ENCODE measurements at regions of chr1 and their contacts with region 1.

Region 1: GRCh38 chr1:230066466-230067404 is at the start of gene GALNT2:
- DNase-seq: peak; percentile 87
- H3K4me3 Mint-ChIP-seq: peak within 1 kb of the TSS; percentile 89
- H3K27ac Mint-ChIP-seq: peak within 1 kb of the TSS; percentile 85
- H3K4me1 Mint-ChIP-seq: peaks cover 32% of the 10 kb centered on the region
- H3K27me3 Mint-ChIP-seq: peaks cover 6% of the 10 kb centered on the region
- total RNA-seq, gene GALNT2: 58.9 and 59.3 TPM in 2 replicates

Region 2: DNA sequence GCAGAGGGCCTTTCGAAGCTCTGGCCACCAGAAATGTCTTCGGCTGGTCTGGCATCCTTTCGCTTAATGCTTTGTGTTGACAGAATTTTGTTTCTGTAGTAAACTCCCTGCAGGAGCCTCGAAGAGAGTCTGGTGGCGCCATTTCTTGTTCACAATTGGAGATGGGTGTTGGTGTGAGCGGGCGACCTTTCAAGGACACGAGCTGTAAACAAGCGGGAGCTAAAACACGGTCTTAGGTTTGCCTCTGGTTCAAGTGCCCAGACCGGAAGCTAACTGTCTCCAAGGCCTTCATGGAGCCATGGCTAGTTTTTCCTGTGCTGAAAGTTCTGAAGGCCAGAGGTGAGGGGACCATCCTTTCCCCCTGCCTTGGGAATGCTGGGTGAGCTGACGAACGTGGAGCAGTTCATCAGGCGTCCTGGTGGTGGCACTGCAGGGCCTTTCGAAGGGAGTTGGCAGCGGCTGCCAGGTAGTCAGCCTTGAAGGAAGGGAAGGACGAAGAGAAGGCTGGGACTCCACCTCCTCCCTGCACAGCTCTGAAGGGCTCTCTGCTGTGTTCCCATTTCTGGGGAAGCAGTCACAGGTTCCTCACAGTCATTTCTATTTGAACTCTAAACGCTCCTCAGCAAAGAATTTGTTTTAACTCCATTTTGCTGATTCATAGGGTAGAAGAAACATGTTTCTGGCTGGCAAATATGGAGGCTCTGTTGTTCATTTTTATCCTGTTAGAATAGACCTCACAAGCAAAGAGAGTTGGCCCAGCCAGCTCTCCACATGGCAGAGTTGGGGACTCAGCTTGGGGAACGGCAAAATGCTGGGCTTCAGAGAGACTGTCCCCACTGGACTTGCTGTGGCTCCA is 405.5 kb before region 1 on chr1:
- intact Hi-C with region 1: loop called (anchors 5 kb)
- DNase-seq: peak; percentile 41
- H3K4me3 Mint-ChIP-seq: no peak overlapping the region
- H3K27ac Mint-ChIP-seq: no peak overlapping the region
- H3K4me1 Mint-ChIP-seq: peaks cover 10% of the 10 kb centered on the region
- H3K27me3 Mint-ChIP-seq: peaks cover 2% of the 10 kb centered on the region

Region 3: DNA sequence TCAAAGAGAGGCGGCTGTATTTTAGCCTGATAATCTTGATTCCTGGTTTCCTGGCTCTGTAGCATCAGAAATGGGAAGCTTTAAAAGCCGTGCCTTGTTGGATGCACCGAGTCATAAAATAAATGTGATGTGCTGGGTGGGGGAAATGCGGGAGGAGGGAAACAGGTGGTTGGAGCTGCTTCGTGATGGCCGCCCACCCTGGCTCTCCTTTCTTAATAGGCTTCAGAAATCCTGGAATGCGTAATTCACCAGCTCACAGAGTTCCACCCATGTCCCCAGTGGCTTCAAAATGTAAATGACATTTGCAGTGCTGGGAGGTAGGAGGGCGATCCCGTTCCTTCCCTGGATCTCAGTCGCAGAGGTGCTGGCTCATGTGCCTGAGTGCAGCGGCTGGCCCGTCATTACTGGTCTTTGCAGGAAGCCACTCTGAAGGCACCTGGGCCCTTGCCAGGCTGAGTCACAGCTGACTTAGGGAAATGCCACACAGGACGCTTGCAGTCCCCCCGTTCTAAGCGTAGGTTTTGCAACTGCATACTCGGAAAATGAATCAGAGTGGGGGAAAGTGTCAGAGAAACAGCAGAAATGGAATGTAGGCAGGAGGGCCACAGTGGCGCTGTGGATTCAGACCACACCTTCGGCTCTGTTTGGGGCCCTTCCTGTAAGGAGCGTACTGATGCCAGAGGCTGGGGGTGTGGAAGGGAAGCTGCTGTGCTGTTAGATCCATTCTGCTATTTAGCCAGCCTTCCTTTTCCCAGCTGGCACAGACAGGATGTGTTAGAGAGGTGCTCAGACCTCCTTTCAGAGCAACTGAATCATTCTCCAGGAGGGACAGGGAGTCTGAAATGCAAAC is 37.9 kb after region 1 on chr1:
- intact Hi-C with region 1: loop called (anchors 1 kb)
- DNase-seq: peak; percentile 29
- H3K4me3 Mint-ChIP-seq: peak overlapping the region; percentile 38
- H3K27ac Mint-ChIP-seq: peak overlapping the region; percentile 83
- H3K4me1 Mint-ChIP-seq: peaks cover 85% of the 10 kb centered on the region
- H3K27me3 Mint-ChIP-seq: no peaks in the 10 kb centered on the region

Region 4: DNA sequence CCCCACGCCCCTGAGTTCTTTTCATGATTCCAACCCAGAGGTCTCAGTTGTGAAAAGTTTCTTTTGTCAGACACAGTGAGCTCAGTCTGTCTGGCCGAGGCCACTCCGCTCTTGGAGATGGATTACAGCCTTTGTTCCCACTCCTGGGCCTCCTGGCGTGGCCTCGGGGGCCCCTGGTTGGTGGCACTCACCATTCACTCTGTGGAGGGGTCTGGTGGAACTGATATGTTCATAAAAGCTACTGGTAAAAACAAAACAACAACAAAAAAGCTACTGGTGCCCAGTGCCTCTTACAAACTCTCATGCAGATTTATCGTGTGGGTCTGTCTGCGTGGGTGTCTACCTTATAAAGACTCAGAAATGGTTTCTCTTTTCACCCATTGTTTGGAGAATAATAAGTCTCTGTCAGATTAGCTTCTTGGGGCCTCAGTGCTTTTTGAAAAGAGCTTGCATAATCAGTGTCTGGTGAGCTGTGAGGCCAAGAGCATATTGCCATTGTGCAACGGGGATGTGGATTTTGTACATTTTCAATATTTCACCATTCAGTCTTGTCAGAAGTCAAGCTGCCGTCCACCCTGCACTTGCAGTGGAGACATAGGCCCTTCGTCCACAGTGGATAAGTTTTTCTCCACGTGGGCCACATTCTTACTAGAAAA is 87.0 kb after region 1 on chr1:
- intact Hi-C with region 1: no loop called
- DNase-seq: no peak
- H3K4me3 Mint-ChIP-seq: no peak overlapping the region
- H3K27ac Mint-ChIP-seq: no peak overlapping the region
- H3K4me1 Mint-ChIP-seq: peaks cover 22% of the 10 kb centered on the region
- H3K27me3 Mint-ChIP-seq: no peaks in the 10 kb centered on the region

Region 5: DNA sequence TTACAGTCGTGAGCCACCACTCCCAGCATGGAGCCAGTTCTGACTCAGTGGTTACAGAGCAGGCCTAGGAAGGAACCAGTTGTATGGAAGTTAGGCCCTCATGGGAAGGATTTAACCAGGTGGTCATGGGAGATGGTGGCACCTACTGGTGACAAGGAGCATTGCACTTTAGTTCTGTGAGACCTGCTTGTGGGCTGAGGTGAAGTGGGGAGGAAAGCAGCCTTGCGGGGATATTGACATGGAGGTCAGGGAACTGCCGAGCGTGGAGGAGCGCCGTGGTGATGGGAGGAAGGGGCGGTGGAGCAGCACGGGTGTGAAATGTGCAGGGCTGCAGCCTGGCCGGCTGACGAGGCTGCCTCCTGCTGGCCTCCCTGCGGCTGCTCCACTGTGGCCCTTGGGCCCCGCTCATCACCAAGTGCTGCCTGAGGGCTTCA is 100.7 kb after region 1 on chr1:
- intact Hi-C with region 1: loop called (anchors 5 kb)
- DNase-seq: peak; percentile 18
- H3K4me3 Mint-ChIP-seq: no peak overlapping the region
- H3K27ac Mint-ChIP-seq: no peak overlapping the region
- H3K4me1 Mint-ChIP-seq: peaks cover 30% of the 10 kb centered on the region
- H3K27me3 Mint-ChIP-seq: no peaks in the 10 kb centered on the region

Region 6: DNA sequence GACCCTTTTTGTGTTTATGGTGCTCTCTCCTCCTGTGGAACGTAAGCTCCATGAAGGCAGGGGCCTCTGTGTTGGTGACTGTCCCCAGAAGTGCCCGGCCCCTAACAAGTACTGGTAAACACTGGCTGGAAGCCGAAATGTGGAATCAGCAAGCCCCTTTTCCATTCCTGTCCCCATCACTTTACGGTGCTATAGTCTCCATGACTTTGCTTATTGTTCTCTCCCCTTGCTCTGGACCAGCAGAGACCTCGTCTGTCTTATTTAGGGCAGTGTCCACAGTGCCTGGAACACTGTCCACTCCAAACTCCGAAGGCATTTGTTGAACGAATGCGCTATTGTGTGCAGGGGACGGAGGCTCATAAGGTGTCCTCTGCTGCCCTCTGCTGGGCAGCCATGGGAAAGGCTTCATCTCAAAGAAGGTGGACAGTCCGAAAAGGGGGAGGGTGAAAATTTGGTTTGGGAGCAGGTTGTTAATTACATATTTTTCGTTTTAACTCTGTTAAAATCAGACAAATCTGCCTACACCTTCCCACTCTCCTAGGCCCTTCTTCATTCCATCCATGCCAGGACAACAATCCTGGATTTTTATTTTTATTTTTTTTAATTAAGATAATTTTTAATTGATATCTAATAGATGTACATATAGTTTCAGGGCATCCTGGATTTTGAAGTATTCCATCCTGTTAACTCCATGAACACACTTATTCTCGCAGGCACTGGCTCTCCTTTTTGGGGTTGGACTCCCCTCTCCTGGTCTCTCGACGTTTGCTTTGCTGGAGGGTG is 243.8 kb after region 1 on chr1:
- intact Hi-C with region 1: loop called (anchors 5 kb)
- DNase-seq: peak; percentile 34
- H3K4me3 Mint-ChIP-seq: no peak overlapping the region
- H3K27ac Mint-ChIP-seq: no peak overlapping the region
- H3K4me1 Mint-ChIP-seq: peaks cover 11% of the 10 kb centered on the region
- H3K27me3 Mint-ChIP-seq: peaks cover 3% of the 10 kb centered on the region

Measured in activated T-helper 2 cell treated with anti-CD3 and anti-CD28 coated beads, Interferon-gamma antibody, Interleukin-2, Interleukin-4, amounts not matched to agents 10 μg/mL and 5 μg/mL and 100 μg/mL, durations not matched to agents 14 hours and 24 hours and 36 hours (primary cell).